ENCODE measurements at regions of chr1 and their contacts with region 1.

Region 1: GRCh38 chr1:33118274-33118673 is 37.3 kb downstream of the AZIN2 start:
- DNase-seq: no peak
- ATAC-seq: no peak
- H3K4me3 ChIP-seq: no peak overlapping the region
- H3K27ac ChIP-seq: no peak overlapping the region
- H3K4me1 ChIP-seq: no peaks in the 10 kb centered on the region
- H3K27me3 ChIP-seq: no peaks in the 10 kb centered on the region
- CTCF ChIP-seq: no peak
- POLR2A ChIP-seq: no peak

Region 2: GRCh38 chr1:33036526-33037503 is 81.5 kb before region 1 on chr1 and contains the start of gene AK2:
- in situ Hi-C with region 1: no loop called
- intact Hi-C with region 1: no loop called
- DNase-seq: peak; percentile 98
- ATAC-seq: peak; percentile 93
- H3K4me3 ChIP-seq: peak within 1 kb of the TSS; percentile 78 to 99 (median 94)
- H3K27ac ChIP-seq: peak within 1 kb of the TSS; percentile 95 to 99 (median 98)
- H3K4me1 ChIP-seq: peaks cover 42 to 46% of the 10 kb centered on the region in 2 donors
- H3K27me3 ChIP-seq: no peaks in the 10 kb centered on the region
- CTCF ChIP-seq: no peak
- POLR2A ChIP-seq: peak; percentile 92 to 96
- total RNA-seq, gene AK2: 125 to 261 (median 152) TPM

Region 3: GRCh38 chr1:33094971-33095604 is 23.2 kb before region 1 on chr1:
- in situ Hi-C with region 1: no loop called
- intact Hi-C with region 1: no loop called
- DNase-seq: peak in 1 of 2 donors; percentile 46
- ATAC-seq: peak; percentile 26 to 62
- H3K4me3 ChIP-seq: no peak overlapping the region
- H3K27ac ChIP-seq: no peak overlapping the region
- H3K4me1 ChIP-seq: peaks cover 6 to 9% of the 10 kb centered on the region in 2 donors
- H3K27me3 ChIP-seq: no peaks in the 10 kb centered on the region
- CTCF ChIP-seq: peak; percentile 82 to 98 (median 88)
- POLR2A ChIP-seq: no peak

Region 4: GRCh38 chr1:33137800-33138199 is 19.5 kb after region 1 on chr1:
- in situ Hi-C with region 1: no loop called
- intact Hi-C with region 1: loop called (anchors 1 kb)
- DNase-seq: no peak
- ATAC-seq: no peak
- H3K4me3 ChIP-seq: no peak overlapping the region
- H3K27ac ChIP-seq: no peak overlapping the region
- H3K4me1 ChIP-seq: peaks cover 3 to 9% of the 10 kb centered on the region in 2 donors
- H3K27me3 ChIP-seq: no peaks in the 10 kb centered on the region
- CTCF ChIP-seq: peak in 4 of 5 experiments; percentile 32 to 63 (median 48)
- POLR2A ChIP-seq: no peak

Region 5: GRCh38 chr1:33161061-33161681 is 42.9 kb after region 1 on chr1:
- in situ Hi-C with region 1: no loop called
- intact Hi-C with region 1: no loop called
- DNase-seq: no peak
- ATAC-seq: no peak
- H3K4me3 ChIP-seq: no peak overlapping the region
- H3K27ac ChIP-seq: no peak overlapping the region
- H3K4me1 ChIP-seq: peaks cover 0 to 3% of the 10 kb centered on the region in 2 donors
- H3K27me3 ChIP-seq: no peaks in the 10 kb centered on the region
- CTCF ChIP-seq: no peak
- POLR2A ChIP-seq: no peak

Measured in gastrocnemius medialis (tissue), 4 donors.